Lower leg skin (tissue), 4 donors: ENCODE measurements at regions of chr4 and their contacts with region 1.

Region 1: GRCh38 chr4:47686294-47686872 is 151.5 kb downstream of the CORIN start:
- DNase-seq: peak; percentile 45 to 88
- H3K4me3 ChIP-seq: no peak overlapping the region
- CTCF ChIP-seq: no peak
- POLR2A ChIP-seq: no peak

Region 2: GRCh38 chr4:47836641-47837093 is 150.3 kb after region 1 on chr4:
- intact Hi-C with region 1: loop called (anchors 10 kb)
- DNase-seq: peak; percentile 78 to 96
- H3K4me3 ChIP-seq: peak overlapping the region; percentile 52
- CTCF ChIP-seq: no peak
- POLR2A ChIP-seq: no peak